Heart right ventricle (tissue), 16 donors: ENCODE measurements at regions of chr5 and their contacts with region 1.

Region 1: GRCh38 chr5:145975361-145976066 is 39.1 kb downstream of the SH3RF2 start:
- DNase-seq: no peak
- ATAC-seq: peak in 1 of 8 donors; percentile 22
- H3K4me3 ChIP-seq: no peak overlapping the region
- H3K27ac ChIP-seq: peak overlapping the region in 3 of 10 donors; percentile 16 to 49 (median 25)
- H3K4me1 ChIP-seq: peaks cover 9 to 47% (median 25%) of the 10 kb centered on the region in 9 donors
- H3K27me3 ChIP-seq: no peaks in the 10 kb centered on the region
- CTCF ChIP-seq: no peak

Region 2: DNA sequence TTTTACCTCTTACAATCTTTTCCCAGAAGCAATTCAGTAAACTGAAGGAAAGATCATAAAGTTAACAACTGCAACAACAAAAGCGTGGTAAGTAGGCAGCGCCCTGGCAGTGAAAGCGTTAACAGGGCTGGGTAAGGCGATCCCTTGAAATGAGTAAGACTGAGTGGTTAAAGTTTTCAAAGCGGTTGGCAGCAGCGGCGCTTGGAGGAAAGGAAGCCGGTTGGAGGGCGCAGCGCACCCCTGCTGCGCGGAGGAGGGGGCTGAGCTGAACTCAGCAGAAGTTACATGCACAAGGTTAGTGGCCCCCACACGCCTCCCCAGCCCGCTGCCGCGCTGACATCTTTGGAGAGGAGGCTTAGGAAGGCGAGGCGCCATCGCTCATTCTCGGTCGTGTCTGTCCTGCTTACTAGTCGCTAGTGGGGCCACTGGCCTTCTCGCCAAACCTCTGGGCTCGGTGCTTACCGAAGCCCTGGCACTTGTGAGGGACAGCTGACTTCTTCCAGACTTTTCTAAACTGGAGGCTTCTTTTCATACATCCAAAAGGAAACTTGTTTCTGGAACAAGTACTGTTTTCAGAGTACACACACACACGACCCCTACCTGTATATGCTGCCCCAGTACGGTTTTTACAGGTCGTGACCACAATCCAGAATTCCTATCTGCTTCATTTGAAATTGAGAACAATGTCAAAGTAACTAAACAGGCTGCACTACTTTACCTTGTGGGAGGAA is 38.9 kb before region 1 on chr5 and contains the start of gene SH3RF2:
- intact Hi-C with region 1: loop called in 1 of 10 experiments (anchors 5 kb)
- DNase-seq: peak; percentile 24 to 40
- ATAC-seq: peak; percentile 59 to 89 (median 87)
- H3K4me3 ChIP-seq: peak within 1 kb of the TSS; percentile 10 to 61 (median 52)
- H3K27ac ChIP-seq: peak within 1 kb of the TSS in 8 of 10 donors; percentile 12 to 63 (median 22)
- H3K4me1 ChIP-seq: peaks cover 0 to 41% (median 25%) of the 10 kb centered on the region in 9 donors
- H3K27me3 ChIP-seq: peaks cover 0 to 44% (median 0%) of the 10 kb centered on the region in 7 donors
- CTCF ChIP-seq: no peak
- total RNA-seq, gene SH3RF2: 163 to 456 (median 219) TPM

Region 3: DNA sequence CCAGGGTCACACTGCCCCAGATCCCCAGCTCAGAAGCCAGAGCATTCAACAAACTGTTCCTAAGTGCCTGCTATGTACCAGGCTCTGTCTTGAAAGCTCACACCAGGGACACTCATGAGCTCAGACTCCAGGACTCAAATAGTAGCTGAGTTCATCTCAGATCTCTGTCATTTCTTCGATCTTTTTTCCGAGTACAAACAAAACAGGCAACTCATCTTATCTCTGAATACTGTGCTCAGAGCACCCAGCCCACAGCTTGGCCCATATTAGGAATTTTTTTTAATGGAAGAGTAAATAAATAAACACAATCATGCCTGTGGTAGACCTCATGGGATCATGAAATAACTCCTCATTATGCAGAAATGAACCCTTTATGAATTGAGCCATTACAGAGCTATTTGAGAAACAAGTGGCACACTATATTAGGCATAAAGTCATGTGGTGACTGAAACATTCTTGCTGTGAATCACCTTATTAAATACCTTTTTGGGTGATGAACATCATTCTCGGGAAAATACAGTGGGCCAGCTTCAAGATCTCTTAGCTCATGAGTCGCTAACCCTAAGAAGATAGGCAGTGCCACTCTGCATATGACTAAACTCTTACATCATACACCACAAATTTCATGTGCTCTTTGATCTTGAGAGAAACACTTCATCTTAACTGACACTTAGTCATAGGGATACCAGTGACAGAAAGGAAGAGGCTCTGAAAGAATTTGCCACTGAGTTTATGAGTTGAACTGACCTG is 29.2 kb before region 1 on chr5:
- intact Hi-C with region 1: loop called in 1 of 10 experiments (anchors 2 kb)
- DNase-seq: peak; percentile 23 to 32
- ATAC-seq: peak; percentile 70 to 91 (median 86)
- H3K4me3 ChIP-seq: no peak overlapping the region
- H3K27ac ChIP-seq: peak overlapping the region in 9 of 10 donors; percentile 4 to 62 (median 39)
- H3K4me1 ChIP-seq: peaks cover 0 to 39% (median 15%) of the 10 kb centered on the region in 9 donors
- H3K27me3 ChIP-seq: peaks cover 0 to 16% (median 0%) of the 10 kb centered on the region in 7 donors
- CTCF ChIP-seq: no peak